Dorsolateral prefrontal cortex (tissue), 120 donors: ENCODE measurements at regions of chr13 and their contacts with region 1.

Region 1: DNA sequence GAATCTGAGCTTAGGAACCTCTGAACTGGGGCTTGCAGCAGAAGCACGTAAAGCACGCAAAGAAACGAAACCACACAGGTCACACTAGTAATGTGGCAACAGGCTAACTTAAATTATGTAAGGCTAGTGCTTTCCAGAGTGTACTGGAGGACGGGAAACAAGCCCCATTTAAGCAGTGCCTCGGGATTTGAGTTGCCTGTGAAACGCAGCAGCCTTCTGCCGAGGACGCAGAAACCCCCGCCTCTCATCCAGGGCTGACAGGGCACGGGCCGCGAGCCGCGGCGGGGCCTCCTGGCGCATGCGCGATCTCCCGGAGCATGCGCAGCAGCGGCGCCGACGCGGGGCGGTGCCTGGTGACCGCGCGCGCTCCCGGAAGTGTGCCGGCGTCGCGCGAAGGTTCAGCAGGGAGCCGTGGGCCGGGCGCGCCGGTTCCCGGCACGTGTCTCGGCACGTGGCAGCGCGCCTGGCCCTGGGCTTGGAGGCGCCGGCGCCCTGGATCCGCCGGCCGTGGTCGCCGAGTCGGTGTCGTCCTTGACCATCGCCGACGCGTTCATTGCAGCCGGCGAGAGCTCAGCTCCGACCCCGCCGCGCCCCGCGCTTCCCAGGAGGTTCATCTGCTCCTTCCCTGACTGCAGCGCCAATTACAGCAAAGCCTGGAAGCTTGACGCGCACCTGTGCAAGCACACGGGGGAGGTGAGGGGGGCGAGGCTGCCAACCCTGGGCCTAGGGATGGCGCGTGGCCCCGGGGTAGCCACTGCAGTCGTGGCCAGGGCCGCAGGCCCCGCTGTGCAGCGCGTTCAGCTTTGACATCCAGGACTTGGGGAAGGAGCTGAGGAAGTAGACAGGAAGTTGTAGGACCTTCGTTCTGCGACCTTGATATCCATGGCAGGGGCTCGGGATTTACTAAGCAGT is at the start of gene GTF3A:
- DNase-seq: peak; percentile 50 to 90 (median 70)
- H3K4me3 ChIP-seq: peak within 1 kb of the TSS; percentile 53 to 98 (median 92)
- H3K27ac ChIP-seq: peak within 1 kb of the TSS; percentile 41 to 96 (median 86)
- H3K27me3 ChIP-seq: no peaks in the 10 kb centered on the region
- CTCF ChIP-seq: peak in 27 of 56 donors; percentile 2 to 61 (median 23)
- total RNA-seq, gene GTF3A: 43.2 to 103 (median 71.3) TPM

Region 2: DNA sequence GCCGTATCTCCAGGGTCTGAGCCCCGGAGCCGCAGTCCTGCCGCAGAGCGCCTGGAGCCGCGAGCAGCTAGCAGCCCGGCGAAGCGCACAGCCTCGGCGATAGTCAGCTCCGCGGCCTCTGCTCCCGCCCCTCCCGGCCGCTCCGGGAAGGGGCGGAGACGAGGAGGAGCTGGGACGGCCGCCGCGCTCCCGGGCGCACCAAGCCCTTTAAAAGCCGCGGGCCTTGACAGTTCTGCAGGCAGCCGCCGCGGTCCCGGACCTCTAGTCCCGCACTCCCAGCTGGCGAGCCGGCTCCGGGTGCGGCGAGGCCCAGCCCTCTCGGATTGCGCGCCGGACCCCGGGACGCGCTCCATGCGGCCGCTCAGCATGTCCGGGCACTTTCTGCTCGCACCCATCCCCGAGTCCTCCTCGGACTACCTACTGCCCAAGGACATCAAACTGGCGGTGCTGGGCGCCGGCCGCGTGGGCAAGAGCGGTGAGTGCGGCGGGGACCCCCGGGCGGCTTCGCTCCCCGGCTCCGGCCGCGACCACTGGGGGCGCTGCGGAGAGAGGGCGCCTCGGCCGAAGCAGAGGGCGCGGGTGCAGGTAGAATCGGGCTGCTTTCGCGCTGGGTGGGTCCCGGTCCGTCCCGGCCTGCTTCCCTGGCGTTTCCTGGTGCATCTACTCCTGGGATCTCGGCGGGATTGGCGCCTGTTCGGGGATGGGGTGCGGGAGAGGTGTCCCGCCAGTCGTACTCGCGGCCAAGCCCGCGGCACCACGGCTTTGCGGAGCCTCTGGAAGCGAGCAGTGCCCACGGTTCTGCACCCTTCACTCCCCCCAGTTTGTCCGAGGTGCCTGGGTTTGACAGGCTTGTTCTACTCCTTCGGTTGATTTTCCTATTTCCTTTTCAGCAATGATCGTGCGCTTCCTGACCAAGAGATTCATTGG is 153.6 kb before region 1 on chr13 and contains the start of gene RASL11A:
- intact Hi-C with region 1: loop called in 1 of 2 experiments (anchors 10 kb)
- DNase-seq: peak; percentile 71 to 90 (median 83)
- H3K4me3 ChIP-seq: peak within 1 kb of the TSS; percentile 63 to 96 (median 89)
- H3K27ac ChIP-seq: peak within 1 kb of the TSS; percentile 32 to 97 (median 91)
- H3K27me3 ChIP-seq: no peaks in the 10 kb centered on the region
- CTCF ChIP-seq: peak in 55 of 56 donors; percentile 71 to 97 (median 89)
- total RNA-seq, gene RASL11A: 1.2 to 14.3 (median 5.2) TPM

Region 3: GRCh38 chr13:27374650-27375049 is 49.9 kb before region 1 on chr13:
- intact Hi-C with region 1: loop called in 1 of 2 experiments (anchors 2 kb)
- DNase-seq: peak in 8 of 10 donors; percentile 47 to 69 (median 56)
- H3K4me3 ChIP-seq: peak overlapping the region in 2 of 59 donors; percentile 13 to 21
- H3K27ac ChIP-seq: no peak overlapping the region
- H3K27me3 ChIP-seq: peaks cover 0 to 35% (median 9%) of the 10 kb centered on the region in 45 donors
- CTCF ChIP-seq: peak; percentile 39 to 89 (median 76)

Region 4: DNA sequence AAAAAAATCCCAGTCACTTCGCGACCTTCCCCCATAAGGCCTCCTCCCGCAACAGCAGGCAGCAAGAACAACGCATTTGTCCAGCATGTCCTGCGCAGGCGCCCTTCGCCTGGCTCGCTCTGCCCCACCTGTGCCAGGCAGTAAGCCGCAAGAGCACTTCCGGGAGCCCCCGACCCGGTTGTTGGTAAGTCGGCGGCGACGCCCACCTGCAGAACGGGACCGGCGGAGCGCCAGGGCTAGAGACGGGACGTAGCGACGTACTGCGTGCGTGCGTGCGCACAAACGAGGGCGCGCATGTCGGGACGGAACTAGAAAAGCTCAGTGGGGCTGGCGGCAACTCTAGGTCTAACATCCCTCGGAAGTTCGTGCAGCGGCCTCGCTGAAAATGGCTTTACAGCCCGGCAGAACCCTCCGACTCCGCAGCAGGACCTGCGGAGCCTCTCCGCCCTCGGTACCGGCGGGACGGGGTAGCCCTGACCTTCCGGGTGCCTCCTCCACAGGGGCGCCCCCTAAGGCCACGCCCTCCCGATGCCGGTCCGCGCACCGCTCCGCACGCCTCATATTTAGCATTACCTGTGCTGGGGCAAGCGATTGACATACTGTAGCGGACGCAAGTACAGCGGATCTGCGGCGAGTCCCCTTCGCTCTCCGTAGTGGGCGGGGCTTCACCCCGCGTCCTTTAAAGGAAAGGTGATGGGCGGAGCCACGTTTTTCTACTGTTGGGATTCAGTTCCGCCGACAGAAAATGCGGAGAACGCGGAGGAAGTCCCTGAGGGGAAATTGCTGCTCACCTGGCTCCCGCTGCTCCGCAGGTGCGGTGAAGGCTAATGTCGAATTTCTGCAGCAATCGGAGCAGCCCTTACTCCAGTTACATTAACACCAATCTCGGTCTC is 25.7 kb after region 1 on chr13 and contains the start of gene MTIF3:
- intact Hi-C with region 1: loop called (anchors 1 kb)
- DNase-seq: peak; percentile 84 to 96 (median 94)
- H3K4me3 ChIP-seq: peak within 1 kb of the TSS; percentile 57 to 99 (median 93)
- H3K27ac ChIP-seq: peak within 1 kb of the TSS; percentile 77 to 100 (median 99)
- H3K27me3 ChIP-seq: no peaks in the 10 kb centered on the region
- CTCF ChIP-seq: peak in 20 of 56 donors; percentile 4 to 41 (median 22)
- total RNA-seq, gene MTIF3: 32.1 to 71.7 (median 50.4) TPM

Region 5: GRCh38 chr13:27620377-27621115 is 196.0 kb after region 1 on chr13 and contains the start of gene LNX2:
- intact Hi-C with region 1: loop called (anchors 10 kb)
- DNase-seq: peak; percentile 95 to 100 (median 98)
- H3K4me3 ChIP-seq: peak within 1 kb of the TSS; percentile 74 to 99 (median 88)
- H3K27ac ChIP-seq: peak within 1 kb of the TSS; percentile 41 to 96 (median 89)
- H3K27me3 ChIP-seq: no peaks in the 10 kb centered on the region
- CTCF ChIP-seq: peak in 21 of 56 donors; percentile 0 to 53 (median 15)
- total RNA-seq, gene LNX2: 3.0 to 8.1 (median 5.5) TPM